ENCODE measurements at regions of chr2 and their contacts with region 1.

Region 1: GRCh38 chr2:26846328-26847306 is 1.3 kb upstream of the DPYSL5 start:
- DNase-seq: peak; percentile 76
- ATAC-seq: peak; percentile 33
- H3K4me3 Mint-ChIP-seq: peak overlapping the region; percentile 79
- H3K27ac Mint-ChIP-seq: no peak overlapping the region
- H3K4me1 Mint-ChIP-seq: peaks cover 9% of the 10 kb centered on the region
- H3K27me3 Mint-ChIP-seq: peaks cover 68% of the 10 kb centered on the region
- CTCF ChIP-seq: peak; percentile 53

Region 2: GRCh38 chr2:26816893-26817292 is 29.7 kb before region 1 on chr2:
- CTCF ChIA-PET with region 1: interaction called, 18 read pairs
- POLR2A ChIA-PET with region 1: no interaction called
- DNase-seq: peak; percentile 55
- ATAC-seq: peak; percentile 97
- H3K4me3 Mint-ChIP-seq: no peak overlapping the region
- H3K27ac Mint-ChIP-seq: no peak overlapping the region
- H3K4me1 Mint-ChIP-seq: 0 out of 2 replicates have a peak, but pooled peaks cover 2% of the 10 kb centered on the region
- H3K27me3 Mint-ChIP-seq: peaks cover 2% of the 10 kb centered on the region; the same call in 1 of the 2 replicates
- CTCF ChIP-seq: no peak

Region 3: DNA sequence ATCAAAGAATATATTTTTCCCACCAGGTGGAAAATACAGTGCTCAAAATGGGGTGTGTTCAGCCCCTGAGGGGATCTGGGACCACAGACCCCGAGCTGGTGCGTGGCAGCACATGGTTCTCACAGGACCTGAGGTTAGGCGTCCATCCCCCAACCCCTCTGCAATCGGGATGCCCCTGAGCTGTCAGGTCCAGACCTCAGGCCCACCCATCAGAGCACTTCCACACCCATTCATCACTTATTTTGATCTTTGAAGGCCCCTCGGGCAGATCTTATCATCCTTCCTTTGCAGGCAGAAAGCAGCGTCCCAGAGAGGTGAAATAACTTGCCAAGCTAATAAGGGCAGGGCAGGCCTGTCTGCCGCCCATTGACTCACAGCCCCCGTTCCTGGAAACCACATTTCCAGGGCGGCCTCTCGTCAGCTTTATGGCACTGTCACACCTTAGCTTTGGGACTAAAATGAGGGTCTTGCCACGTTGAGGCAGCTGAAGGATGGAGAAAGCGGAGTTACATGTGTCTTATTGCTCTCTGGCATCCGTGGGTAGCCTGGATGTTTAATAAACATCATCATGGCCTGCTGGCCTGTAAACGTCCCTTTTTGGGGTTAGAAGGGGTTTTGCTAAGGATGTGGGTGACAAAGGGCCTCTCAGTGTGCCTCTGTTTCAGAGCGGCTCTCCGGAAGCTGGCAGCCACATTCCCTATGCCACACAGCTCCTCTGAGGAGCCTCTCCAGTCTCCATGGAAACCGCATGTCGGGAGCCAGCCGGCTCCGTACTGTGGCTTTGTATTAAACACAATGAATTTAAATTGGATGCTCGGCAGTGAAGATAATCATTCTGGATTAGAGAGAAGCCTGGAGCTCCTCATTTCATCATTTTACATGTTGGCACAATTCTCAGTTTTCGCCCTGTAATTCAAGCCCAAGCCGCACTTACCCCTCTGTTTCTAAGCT is 65.6 kb after region 1 on chr2:
- CTCF ChIA-PET with region 1: interaction called, 24 read pairs
- POLR2A ChIA-PET with region 1: no interaction called
- DNase-seq: peak; percentile 45
- ATAC-seq: peak; percentile 86
- H3K4me3 Mint-ChIP-seq: peak overlapping the region; percentile 33
- H3K27ac Mint-ChIP-seq: no peak overlapping the region
- H3K4me1 Mint-ChIP-seq: peaks cover 28% of the 10 kb centered on the region
- H3K27me3 Mint-ChIP-seq: peaks cover 3% of the 10 kb centered on the region; the same call in 1 of the 2 replicates
- CTCF ChIP-seq: no peak

Region 4: GRCh38 chr2:26922405-26923188 is 76.0 kb after region 1 on chr2:
- CTCF ChIA-PET with region 1: interaction called, 137 read pairs
- POLR2A ChIA-PET with region 1: interaction called, 3 read pairs
- DNase-seq: peak; percentile 73
- ATAC-seq: peak; percentile 90
- H3K4me3 Mint-ChIP-seq: no peak overlapping the region
- H3K27ac Mint-ChIP-seq: no peak overlapping the region
- H3K4me1 Mint-ChIP-seq: peaks cover 13% of the 10 kb centered on the region
- H3K27me3 Mint-ChIP-seq: no peaks in the 10 kb centered on the region
- CTCF ChIP-seq: peak; percentile 28; the same call in 1 of the 2 replicates

Region 5: DNA sequence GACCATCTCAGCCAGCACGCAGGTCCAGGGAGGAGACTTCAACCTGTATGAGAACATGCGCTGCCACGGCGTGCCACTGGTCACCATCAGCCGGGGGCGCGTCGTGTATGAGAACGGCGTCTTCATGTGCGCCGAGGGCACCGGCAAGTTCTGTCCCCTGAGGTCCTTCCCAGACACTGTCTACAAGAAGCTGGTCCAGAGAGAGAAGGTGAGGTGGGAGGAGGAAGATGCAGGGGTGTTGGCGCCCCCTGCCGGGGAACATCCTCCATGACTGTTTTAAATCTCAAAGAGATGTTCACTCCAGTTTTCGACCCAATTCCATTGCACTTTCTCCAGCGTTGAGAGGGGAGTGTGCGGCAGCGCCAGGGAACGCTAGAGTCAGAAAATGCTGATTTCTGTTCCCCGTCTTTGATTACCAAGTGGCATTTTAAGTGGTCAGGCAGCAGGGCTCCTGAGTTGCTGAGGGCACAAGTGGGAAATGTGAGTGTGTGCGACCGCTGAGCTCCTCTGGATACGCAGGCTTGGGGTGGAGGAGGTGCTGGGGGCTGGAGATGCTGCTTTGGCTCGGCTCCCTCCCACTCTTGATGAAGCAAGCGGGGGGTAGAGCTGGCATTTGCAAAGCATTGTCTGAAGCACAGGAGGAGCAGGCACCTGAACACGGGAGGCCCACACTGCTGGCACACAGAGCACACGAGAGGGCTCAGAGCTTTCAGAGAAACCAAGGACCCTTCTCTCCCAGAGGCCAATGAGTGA is 96.1 kb after region 1 on chr2:
- CTCF ChIA-PET with region 1: interaction called, 315 read pairs
- POLR2A ChIA-PET with region 1: interaction called, 7 read pairs
- DNase-seq: peak; percentile 87
- ATAC-seq: peak; percentile 78
- H3K4me3 Mint-ChIP-seq: peak overlapping the region; percentile 86
- H3K27ac Mint-ChIP-seq: no peak overlapping the region
- H3K4me1 Mint-ChIP-seq: peaks cover 16% of the 10 kb centered on the region
- H3K27me3 Mint-ChIP-seq: peaks cover 29% of the 10 kb centered on the region
- CTCF ChIP-seq: peak; percentile 96

Region 6: GRCh38 chr2:27058210-27058609 is 211.6 kb after region 1 on chr2:
- CTCF ChIA-PET with region 1: no interaction called
- POLR2A ChIA-PET with region 1: no interaction called
- DNase-seq: no peak
- ATAC-seq: no peak
- H3K4me3 Mint-ChIP-seq: no peak overlapping the region
- H3K27ac Mint-ChIP-seq: no peak overlapping the region
- H3K4me1 Mint-ChIP-seq: no peaks in the 10 kb centered on the region
- H3K27me3 Mint-ChIP-seq: no peaks in the 10 kb centered on the region
- CTCF ChIP-seq: no peak

Measured in WTC11 (cell line).